Psoas muscle (tissue), 8 donors: ENCODE measurements at regions of chr10 and their contacts with region 1.

Region 1: DNA sequence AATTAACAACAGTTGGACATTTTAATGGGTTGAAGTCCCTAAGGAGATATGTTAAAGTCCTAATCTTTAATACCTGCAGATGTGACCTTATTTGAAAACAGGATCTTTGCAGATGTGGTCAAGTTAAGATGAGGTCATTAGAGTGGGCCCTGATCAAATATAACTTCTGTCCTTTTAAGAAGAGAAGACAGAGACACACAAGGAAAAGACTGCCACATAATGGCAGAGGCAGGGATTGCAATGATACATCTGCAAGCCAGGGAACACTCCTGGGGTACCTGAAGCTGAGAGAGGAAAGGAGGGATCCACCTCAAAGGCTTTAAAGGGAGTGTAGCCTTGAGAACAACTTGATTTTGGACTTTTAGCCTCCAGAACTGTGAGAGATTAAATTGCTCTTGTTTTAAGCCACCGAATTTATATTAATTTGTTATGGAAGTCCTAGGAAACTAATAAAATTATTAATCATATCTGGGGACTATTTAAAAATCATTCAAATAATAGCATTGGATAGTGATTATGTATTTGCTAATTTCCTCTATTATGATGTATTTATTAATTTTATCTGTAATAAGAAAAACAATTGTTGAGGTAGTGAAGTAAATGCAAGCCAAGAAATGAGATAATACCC is 700.0 kb upstream of the PCDH15 start:
- DNase-seq: no peak
- ATAC-seq: no peak
- H3K4me3 ChIP-seq: no peak overlapping the region
- H3K27ac ChIP-seq: no peak overlapping the region
- H3K4me1 ChIP-seq: no peaks in the 10 kb centered on the region
- H3K27me3 ChIP-seq: no peaks in the 10 kb centered on the region
- CTCF ChIP-seq: peak; percentile 45

Region 2: DNA sequence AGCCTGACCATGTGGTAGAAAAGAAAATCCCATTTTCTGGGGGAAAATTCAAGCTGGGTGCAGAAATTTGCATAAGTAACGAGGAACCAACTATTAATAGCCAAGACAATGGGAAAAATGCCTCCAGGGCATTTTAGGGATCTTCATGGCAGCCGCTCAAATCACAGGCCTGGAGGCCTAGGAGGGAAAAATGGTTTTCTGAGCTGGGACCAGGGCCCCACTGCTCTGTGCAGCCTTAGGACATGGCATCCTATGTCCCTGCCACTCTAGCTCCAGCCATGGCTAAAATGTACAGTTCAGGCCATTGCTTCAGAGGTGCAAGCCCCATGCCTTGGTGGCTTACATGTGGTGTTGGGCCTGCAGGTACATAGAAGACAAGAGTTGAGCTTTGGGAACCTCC is 1159.0 kb before region 1 on chr10:
- intact Hi-C with region 1: loop called in 1 of 2 experiments (anchors 5 kb)
- DNase-seq: no peak
- ATAC-seq: no peak
- H3K4me3 ChIP-seq: no peak overlapping the region
- H3K27ac ChIP-seq: no peak overlapping the region
- H3K4me1 ChIP-seq: no peaks in the 10 kb centered on the region
- H3K27me3 ChIP-seq: no peaks in the 10 kb centered on the region
- CTCF ChIP-seq: no peak

Region 3: DNA sequence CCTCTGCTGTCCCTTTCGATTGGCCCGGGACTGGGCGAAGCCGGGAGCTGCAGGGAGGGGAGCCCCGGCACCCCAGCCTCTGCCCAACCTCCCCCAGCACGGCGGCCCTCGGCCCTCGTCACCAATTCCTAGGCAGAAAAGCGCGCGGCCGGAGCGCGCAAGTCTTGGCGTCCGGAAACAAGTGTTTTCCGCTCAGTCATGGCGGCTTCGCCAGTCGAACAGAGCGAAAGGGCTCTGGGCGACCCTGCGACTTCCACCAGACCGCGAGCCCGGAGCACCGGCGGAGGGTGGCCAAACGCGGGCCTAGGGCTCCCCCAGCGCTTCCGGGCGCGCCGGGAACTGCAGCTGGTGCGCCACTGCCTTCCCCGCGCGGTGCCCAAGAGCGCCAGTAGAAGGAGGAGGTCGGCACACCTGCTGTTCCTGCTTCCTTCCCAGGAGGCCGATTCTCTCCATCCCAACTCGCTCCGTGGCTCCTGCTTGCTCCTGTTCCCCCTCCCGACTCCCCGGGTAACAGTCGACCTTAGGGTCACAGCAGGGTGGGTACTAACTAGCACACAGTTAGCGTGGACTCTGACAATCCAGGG is 130.1 kb after region 1 on chr10:
- intact Hi-C with region 1: no loop called
- DNase-seq: peak; percentile 43 to 55
- ATAC-seq: peak; percentile 43 to 94 (median 87)
- H3K4me3 ChIP-seq: peak overlapping the region; percentile 58
- H3K27ac ChIP-seq: no peak overlapping the region
- H3K4me1 ChIP-seq: no peaks in the 10 kb centered on the region
- H3K27me3 ChIP-seq: peaks cover 2 to 23% (median 9%) of the 10 kb centered on the region in 3 donors
- CTCF ChIP-seq: peak; percentile 50